ENCODE measurements at regions of chr17 and their contacts with region 1.

Region 1: DNA sequence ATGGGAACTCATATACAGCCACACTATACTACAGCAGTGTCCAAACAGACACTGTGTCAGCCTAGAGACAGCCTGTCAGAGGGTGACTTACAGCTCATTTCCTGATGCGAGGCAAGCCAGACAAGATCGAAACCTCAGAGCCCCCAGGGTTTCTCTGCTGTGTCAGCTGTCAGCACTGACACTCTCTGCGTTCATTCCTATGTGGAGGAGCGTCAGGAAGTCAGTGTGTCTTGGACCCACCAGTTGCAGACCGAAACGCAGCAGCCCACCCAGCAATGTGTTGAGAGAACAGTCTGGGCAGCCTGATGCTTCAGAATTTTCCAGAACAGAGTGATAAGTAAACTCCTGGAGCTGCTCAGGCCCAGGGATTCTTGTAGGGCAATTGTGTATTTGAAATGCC is 20.6 kb upstream of the MAPT start:
- DNase-seq: peak; percentile 62
- ATAC-seq: peak; percentile 91
- H3K4me3 Mint-ChIP-seq: no peak overlapping the region
- H3K27ac Mint-ChIP-seq: no peak overlapping the region
- H3K4me1 Mint-ChIP-seq: peaks cover 14% of the 10 kb centered on the region
- H3K27me3 Mint-ChIP-seq: peaks cover 16% of the 10 kb centered on the region

Region 2: GRCh38 chr17:45894022-45894784 is 20.5 kb after region 1 on chr17 and contains the start of gene MAPT:
- CTCF ChIA-PET with region 1: interaction called, 11 read pairs
- DNase-seq: peak; percentile 78
- ATAC-seq: peak; percentile 89
- H3K4me3 Mint-ChIP-seq: peak within 1 kb of the TSS; percentile 70
- H3K27ac Mint-ChIP-seq: peak within 1 kb of the TSS; percentile 24
- H3K4me1 Mint-ChIP-seq: peaks cover 14% of the 10 kb centered on the region
- H3K27me3 Mint-ChIP-seq: peaks cover 76% of the 10 kb centered on the region
- total RNA-seq, gene MAPT: 0.15 TPM in 1 of 2 experiments, not detected in the other